GM10248 (cell line): ENCODE measurements at regions of chr1 and their contacts with region 1.

Region 1: GRCh38 chr1:160251687-160252526 is 10.4 kb downstream of the DCAF8 start:
- DNase-seq: peak; percentile 67
- CTCF ChIP-seq: peak; percentile 71

Region 2: GRCh38 chr1:160018900-160019299 is 233.0 kb before region 1 on chr1:
- CTCF ChIA-PET with region 1: no interaction called
- POLR2A ChIA-PET with region 1: no interaction called
- DNase-seq: no peak
- CTCF ChIP-seq: no peak

Region 3: DNA sequence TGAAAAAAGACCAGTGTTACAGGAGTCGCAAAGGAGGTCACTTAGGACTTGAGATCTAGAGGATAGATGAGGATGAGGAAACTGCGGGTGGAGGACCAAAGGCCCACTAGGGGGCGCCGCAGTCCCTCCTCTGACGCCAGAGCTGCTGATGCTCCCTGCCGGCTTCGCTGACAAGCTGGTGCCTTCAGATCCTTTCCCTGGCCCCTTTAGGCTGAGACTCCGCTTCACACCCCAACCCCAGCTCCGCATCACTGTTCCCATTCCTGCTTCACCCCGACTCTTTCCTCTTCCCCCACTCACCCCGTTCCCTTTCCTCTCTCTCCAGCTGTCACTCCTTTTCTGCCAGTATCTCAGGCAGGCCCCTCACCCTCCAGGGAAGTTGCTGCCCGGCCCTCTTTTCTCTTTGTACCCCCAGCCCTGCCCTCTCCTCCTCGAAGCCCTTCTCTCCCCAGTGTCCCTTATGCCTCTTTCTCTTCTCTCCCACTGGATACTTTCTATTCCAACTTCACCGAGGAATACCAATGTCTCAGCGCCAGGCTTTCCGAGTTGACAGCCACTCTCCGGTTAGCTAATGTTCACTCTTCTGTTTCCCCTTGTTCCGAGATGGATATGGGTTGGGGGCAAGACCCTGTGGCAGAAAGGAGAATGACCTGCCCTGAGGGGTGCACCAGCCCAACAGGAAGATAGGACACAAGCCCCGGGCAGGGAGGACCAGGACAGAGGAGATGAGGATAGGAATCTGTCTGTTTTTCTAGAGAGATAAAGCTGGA is 166.0 kb before region 1 on chr1:
- CTCF ChIA-PET with region 1: interaction called, 25 read pairs
- POLR2A ChIA-PET with region 1: no interaction called
- DNase-seq: peak; percentile 89
- CTCF ChIP-seq: peak; percentile 71

Region 4: GRCh38 chr1:160108888-160109662 is 142.8 kb before region 1 on chr1:
- CTCF ChIA-PET with region 1: interaction called, 91 read pairs
- POLR2A ChIA-PET with region 1: no interaction called
- DNase-seq: peak; percentile 60
- CTCF ChIP-seq: peak; percentile 35

Region 5: GRCh38 chr1:160193091-160193819 is 58.7 kb before region 1 on chr1:
- CTCF ChIA-PET with region 1: interaction called, 51 read pairs
- POLR2A ChIA-PET with region 1: no interaction called
- DNase-seq: peak; percentile 79
- CTCF ChIP-seq: peak; percentile 98

Region 6: DNA sequence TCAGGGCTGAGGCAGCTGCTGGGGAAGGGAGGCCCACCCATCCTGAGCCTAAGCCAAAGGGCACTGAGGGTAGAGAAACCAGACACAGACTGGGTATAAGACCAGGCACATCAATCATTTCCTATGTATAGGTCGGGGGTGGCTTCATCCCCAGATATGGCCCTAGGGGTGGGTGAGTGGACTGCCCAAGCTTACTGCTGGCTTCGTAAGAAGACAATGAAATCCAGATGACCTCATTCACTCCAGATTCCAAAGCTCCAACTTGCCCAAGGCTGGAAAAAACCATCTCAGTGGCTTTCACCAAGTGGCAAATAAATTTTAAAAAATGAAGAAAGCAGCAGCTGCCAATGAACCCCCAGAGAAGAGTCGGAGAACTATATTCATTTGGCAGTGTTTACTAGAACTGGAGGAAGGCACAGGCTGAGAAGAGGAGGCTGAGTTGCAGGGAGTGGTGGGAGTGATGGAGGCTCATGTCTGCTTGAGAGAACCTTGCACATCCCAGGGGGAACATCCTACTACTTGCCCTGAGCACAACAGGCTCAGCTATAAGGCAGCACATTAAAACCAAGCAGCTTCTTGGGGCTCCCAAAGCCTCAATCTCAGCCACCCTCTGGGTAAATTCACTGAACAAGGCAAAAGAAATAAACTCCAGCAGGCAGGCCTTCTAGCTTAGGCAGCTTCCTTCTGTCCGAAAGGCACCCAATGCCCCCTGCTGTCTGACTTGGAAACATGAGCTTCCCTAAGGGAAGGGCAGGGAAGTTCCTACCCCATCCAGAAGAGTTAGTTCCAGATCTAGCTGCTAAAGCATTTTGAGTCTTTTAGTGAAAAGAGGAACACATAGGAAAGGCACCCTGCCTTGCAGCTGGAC is 32.6 kb before region 1 on chr1:
- CTCF ChIA-PET with region 1: interaction called, 18 read pairs
- POLR2A ChIA-PET with region 1: no interaction called
- DNase-seq: no peak
- CTCF ChIP-seq: no peak

Region 7: GRCh38 chr1:160232911-160233310 is 19.0 kb before region 1 on chr1:
- CTCF ChIA-PET with region 1: interaction called, 84 read pairs
- POLR2A ChIA-PET with region 1: no interaction called
- DNase-seq: no peak
- CTCF ChIP-seq: no peak

Region 8: DNA sequence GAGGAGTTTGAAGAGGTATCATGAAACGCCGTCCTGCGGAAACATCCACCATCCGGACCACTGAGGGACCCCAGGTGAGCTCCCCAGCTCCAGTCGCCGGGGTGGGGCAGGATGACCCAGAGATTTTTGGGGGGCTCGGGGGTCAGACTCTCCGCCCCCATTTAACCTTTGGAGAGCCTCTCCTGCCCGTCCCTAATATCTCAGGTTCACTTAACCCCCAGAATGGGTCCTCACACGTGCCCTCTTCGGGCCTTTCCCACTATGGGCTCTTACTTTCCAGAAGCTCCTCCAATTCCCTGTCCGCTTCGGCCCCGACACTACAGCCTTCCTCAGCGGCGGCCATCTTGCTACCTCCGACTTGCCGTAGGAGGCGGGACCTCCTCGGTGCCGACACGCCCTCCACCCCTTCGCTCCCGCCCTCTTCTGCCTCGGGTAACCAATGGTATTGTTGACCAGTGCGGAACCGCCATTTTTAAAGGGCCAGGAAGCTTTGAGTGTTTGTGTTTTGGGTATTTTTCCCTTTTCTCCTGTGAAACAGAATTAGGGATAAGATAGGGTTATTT is 33.0 kb after region 1 on chr1 and contains the start of gene PEX19:
- CTCF ChIA-PET with region 1: interaction called, 36 read pairs
- POLR2A ChIA-PET with region 1: no interaction called
- DNase-seq: peak; percentile 97
- CTCF ChIP-seq: no peak

Region 9: GRCh38 chr1:160309180-160309530 is 57.2 kb after region 1 on chr1:
- CTCF ChIA-PET with region 1: no interaction called
- POLR2A ChIA-PET with region 1: no interaction called
- DNase-seq: no peak
- CTCF ChIP-seq: no peak